ENCODE measurements at regions of chr13 and their contacts with region 1.

Region 1: GRCh38 chr13:28324181-28324789 is 170.6 kb downstream of the FLT1 start:
- DNase-seq: peak in 4 of 6 donors; percentile 22 to 55 (median 42)
- ATAC-seq: peak in 3 of 4 donors; percentile 81 to 89 (median 87)
- H3K4me3 ChIP-seq: no peak overlapping the region
- H3K27ac ChIP-seq: no peak overlapping the region
- H3K4me1 ChIP-seq: no peaks in the 10 kb centered on the region
- H3K27me3 ChIP-seq: no peaks in the 10 kb centered on the region
- CTCF ChIP-seq: peak; percentile 33 to 67 (median 54)

Region 2: DNA sequence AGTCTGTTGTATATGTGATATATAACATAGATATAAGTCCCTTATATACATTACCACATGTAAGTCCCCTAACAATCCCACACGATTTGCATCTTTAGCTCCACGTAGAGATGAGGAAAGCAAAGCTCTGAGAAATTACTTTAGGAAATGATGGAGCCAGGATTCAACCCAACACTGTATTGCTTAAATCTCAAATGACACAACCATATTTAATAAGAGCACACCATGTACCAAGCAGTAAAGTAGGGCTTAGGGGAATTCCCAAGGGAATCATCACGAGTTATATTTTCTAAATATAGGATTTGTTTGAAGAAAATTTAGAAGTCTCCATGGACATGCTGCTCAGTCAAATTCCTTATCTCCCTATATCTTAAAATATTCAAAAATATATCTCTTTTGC is 273.4 kb after region 1 on chr13:
- intact Hi-C with region 1: no loop called
- DNase-seq: no peak
- ATAC-seq: no peak
- H3K4me3 ChIP-seq: no peak overlapping the region
- H3K27ac ChIP-seq: no peak overlapping the region
- H3K4me1 ChIP-seq: no peaks in the 10 kb centered on the region
- H3K27me3 ChIP-seq: peaks cover 0 to 4% (median 0%) of the 10 kb centered on the region in 4 donors
- CTCF ChIP-seq: no peak

Region 3: GRCh38 chr13:28636674-28637317 is 312.5 kb after region 1 on chr13:
- intact Hi-C with region 1: loop called in 1 of 3 experiments (anchors 10 kb)
- DNase-seq: peak in 2 of 6 donors; percentile 27 to 42
- ATAC-seq: peak in 3 of 4 donors; percentile 92 to 95 (median 92)
- H3K4me3 ChIP-seq: no peak overlapping the region
- H3K27ac ChIP-seq: no peak overlapping the region
- H3K4me1 ChIP-seq: peaks cover 0 to 2% (median 0%) of the 10 kb centered on the region in 3 donors
- H3K27me3 ChIP-seq: no peaks in the 10 kb centered on the region
- CTCF ChIP-seq: peak; percentile 35 to 65 (median 53)

Region 4: DNA sequence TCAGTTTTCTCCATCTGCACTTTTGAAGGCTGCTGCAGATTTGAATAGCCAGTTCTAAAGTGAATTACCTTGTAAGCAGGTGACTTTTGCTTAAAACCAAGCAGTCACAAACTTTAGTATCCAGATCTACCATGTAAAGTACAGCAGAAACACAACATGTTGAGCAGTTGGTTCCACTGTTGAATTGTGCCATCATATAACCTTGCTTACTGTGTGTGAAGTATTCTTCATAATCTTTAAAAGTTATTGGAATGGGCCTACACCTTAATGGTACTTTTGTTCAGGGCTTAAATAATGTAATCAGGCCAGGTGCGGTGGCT is 472.6 kb after region 1 on chr13:
- intact Hi-C with region 1: loop called in 1 of 3 experiments (anchors 5 kb)
- DNase-seq: no peak
- ATAC-seq: no peak
- H3K4me3 ChIP-seq: no peak overlapping the region
- H3K27ac ChIP-seq: no peak overlapping the region
- H3K4me1 ChIP-seq: no peaks in the 10 kb centered on the region
- H3K27me3 ChIP-seq: no peaks in the 10 kb centered on the region
- CTCF ChIP-seq: peak in 2 of 4 donors; percentile 0 to 2

Measured in pancreas (tissue), 10 donors.